BJ (cell line): ENCODE measurements at regions of chr7 and their contacts with region 1.

Region 1: DNA sequence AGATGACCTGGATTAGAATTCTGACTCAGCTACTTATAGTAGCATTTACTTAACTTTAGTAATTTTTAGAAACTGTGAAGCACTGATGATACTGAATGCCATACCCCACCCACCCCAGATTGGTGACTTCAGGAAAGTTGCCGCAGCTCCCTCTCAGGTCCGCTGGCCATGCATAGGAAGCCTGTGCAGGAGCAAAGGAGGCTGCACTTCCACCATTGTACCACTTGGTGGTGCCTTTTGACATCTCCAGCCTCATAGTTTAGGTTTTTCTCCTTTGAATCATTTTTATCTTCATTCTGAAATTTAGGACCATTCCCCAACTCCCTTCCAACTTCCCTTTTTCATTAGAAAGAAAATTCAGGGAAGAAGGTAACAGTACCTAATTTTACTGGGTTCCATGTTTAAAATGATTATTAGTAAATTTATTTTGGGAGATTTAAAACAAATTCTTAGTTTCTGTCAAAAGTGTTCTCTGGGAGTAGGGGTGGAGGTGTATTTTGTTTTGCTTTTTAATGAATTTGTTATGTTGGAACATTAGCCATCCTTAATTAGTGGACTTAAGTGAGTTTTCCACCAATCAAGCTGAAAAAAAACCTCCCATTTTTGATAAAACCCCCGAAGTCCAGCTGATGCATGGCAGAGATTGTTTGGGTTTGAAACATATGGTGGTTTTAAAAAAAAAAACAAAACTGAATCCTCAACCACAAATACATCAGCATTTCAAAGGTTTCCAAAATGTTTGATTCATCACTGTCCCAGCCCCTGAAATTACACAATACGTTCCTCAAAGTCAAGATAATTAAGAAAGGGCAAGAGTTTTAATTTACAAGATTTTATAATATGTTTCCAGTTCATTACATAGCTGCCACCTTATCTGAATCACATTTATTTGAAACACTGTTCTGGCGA is 109.6 kb downstream of the WNT2 start:
- DNase-seq: no peak
- H3K4me3 ChIP-seq: no peak overlapping the region
- H3K27me3 ChIP-seq: no peaks in the 10 kb centered on the region
- CTCF ChIP-seq: peak; percentile 92

Region 2: GRCh38 chr7:117202511-117202910 is 10.7 kb before region 1 on chr7:
- CTCF ChIA-PET with region 1: interaction called, 13 read pairs
- POLR2A ChIA-PET with region 1: no interaction called
- DNase-seq: no peak
- H3K4me3 ChIP-seq: no peak overlapping the region
- H3K27me3 ChIP-seq: no peaks in the 10 kb centered on the region
- CTCF ChIP-seq: no peak

Region 3: DNA sequence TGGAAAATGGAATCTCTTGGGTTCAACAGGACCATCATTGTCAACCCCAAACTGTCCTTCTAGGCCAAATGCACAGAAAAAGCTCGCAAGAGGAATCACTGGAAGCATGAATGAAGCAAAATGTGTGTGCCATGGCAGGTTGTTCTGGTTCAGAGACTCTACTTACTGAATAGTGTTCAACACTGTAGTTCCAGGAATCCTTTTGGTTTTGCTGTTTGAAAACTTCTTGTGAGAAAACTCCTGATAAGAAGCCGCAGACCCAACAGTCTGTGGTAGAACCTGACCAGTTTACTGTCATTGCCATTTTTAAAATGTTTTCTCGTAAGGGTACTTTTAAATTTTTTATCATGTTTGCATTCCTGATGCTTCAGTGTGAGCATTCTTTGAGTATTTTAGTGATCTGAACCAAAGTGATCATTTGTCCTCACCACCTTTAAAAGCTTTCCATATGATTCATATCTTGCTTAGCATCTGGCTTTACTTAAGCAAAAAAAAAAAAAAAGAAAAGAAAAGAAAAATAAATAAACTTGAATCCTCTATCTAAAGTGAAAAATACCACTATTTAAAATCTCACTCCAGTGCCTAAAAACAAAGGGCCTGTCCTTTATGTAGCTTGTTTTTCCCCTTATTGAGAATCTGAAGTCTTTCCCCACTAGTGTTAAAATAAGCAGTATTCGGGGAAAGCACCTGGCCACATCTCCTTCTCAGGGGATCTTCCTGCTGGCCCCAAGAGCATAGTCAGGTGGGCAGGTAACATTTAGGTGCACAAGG is 17.2 kb after region 1 on chr7:
- CTCF ChIA-PET with region 1: interaction called, 13 read pairs
- POLR2A ChIA-PET with region 1: no interaction called
- DNase-seq: peak; percentile 93
- H3K4me3 ChIP-seq: no peak overlapping the region
- H3K27me3 ChIP-seq: no peaks in the 10 kb centered on the region
- CTCF ChIP-seq: no peak

Region 4: DNA sequence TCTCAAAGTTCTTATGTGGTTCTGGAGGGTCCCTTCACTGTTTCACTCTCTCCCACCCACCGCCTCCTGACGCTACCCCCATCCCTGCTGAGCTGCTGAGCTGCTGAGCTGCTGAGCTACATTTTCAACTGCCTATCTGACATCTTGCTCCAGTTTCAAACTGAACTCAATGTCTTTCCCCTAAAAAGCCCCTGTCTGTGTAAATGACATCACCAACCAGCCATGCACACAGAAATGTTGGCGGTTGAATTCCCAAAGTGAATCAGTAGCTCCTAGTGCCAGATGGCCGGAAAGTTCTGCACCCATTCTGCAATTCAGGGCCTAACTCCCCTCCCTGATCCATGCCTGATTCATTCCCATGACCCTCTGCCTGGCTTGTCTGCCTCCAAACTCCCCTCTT is 38.5 kb after region 1 on chr7:
- CTCF ChIA-PET with region 1: interaction called, 11 read pairs
- POLR2A ChIA-PET with region 1: no interaction called
- DNase-seq: no peak
- H3K4me3 ChIP-seq: no peak overlapping the region
- H3K27me3 ChIP-seq: no peaks in the 10 kb centered on the region
- CTCF ChIP-seq: no peak

Region 5: GRCh38 chr7:117338020-117338419 is 124.8 kb after region 1 on chr7:
- CTCF ChIA-PET with region 1: interaction called, 14 read pairs
- POLR2A ChIA-PET with region 1: no interaction called
- DNase-seq: no peak
- H3K4me3 ChIP-seq: no peak overlapping the region
- H3K27me3 ChIP-seq: no peaks in the 10 kb centered on the region
- CTCF ChIP-seq: no peak

Region 6: DNA sequence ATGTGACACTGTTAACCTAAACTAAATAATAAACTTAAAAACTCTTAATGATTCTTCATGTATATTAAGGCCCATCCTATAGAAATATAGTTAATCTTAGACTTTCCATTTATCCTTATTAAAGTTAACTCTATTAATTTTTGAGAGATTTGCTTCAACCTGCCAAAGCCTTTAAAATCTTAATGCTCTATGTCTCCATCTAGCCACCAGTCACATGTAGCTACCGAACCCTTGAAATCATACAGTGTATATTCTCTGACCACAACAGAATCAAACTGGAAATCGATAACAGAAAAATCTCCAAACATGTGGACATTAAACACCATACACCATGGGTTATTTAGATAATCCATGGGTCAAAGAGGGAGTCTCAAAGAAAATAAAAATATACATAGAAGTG is 162.2 kb after region 1 on chr7:
- CTCF ChIA-PET with region 1: interaction called, 18 read pairs
- POLR2A ChIA-PET with region 1: no interaction called
- DNase-seq: no peak
- H3K4me3 ChIP-seq: no peak overlapping the region
- H3K27me3 ChIP-seq: no peaks in the 10 kb centered on the region
- CTCF ChIP-seq: peak; percentile 42; the same call in 1 of the 2 replicates

Region 7: GRCh38 chr7:117385340-117386109 is 172.3 kb after region 1 on chr7:
- CTCF ChIA-PET with region 1: interaction called, 25 read pairs
- POLR2A ChIA-PET with region 1: no interaction called
- DNase-seq: no peak
- H3K4me3 ChIP-seq: no peak overlapping the region
- H3K27me3 ChIP-seq: no peaks in the 10 kb centered on the region
- CTCF ChIP-seq: peak; percentile 39; the same call in 1 of the 2 replicates